CD8-positive, alpha-beta T cell (primary cell): ENCODE measurements at regions of chr11 and their contacts with region 1.

Region 1: DNA sequence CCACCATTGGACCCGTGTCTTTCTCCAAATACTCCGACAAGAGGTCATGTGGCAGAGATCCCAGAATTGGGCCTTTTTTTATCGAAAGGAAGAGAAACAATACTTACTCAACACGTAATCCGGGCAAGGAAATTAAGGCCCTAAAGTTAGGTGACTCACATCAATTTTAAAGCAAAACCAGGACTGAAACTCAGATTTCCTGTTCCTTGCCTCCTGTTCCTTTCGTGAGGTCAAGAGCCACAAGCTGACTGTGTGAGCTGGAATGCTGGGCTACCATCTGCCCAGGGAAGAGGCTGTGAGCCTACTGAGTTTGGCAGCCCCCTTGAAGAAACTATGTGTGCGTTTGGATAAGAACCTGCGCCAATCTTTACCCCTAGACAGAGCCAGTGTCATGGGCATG is 27.1 kb upstream of the MRGPRX2 start:
- DNase-seq: no peak
- ATAC-seq: no peak
- H3K4me3 ChIP-seq: no peak overlapping the region
- H3K4me3 Mint-ChIP-seq: no peak overlapping the region
- H3K27ac ChIP-seq: no peak overlapping the region
- H3K27ac Mint-ChIP-seq: no peak overlapping the region
- H3K4me1 ChIP-seq: no peaks in the 10 kb centered on the region
- H3K4me1 Mint-ChIP-seq: no peaks in the 10 kb centered on the region
- H3K27me3 ChIP-seq: no peaks in the 10 kb centered on the region
- H3K27me3 Mint-ChIP-seq: peaks cover 26% of the 10 kb centered on the region
- CTCF ChIP-seq: no peak

Region 2: DNA sequence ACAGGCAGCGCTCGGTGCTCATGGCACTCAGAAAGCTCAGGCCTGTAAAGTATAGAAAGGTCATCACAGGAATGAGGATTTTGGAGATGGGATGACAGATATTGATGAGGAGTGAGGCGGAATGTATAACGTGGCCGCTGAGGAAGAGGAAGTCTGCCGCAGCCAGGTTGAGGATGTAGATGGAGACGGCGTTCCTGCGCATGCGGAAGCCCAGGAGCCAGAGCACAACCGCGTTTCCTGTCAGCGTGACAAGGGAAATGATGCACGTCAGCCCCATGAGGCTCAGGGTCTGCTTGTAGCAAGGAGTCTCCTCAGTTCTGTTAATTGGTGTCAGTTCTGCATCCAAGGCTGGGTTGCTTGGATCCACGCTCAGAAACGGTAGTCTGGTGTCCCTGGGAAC is 115.3 kb before region 1 on chr11:
- CTCF ChIA-PET with region 1: no interaction called
- POLR2A ChIA-PET with region 1: no interaction called
- intact Hi-C with region 1: no loop called
- DNase-seq: no peak
- ATAC-seq: no peak
- H3K4me3 ChIP-seq: no peak overlapping the region
- H3K4me3 Mint-ChIP-seq: no peak overlapping the region
- H3K27ac ChIP-seq: no peak overlapping the region
- H3K27ac Mint-ChIP-seq: no peak overlapping the region
- H3K4me1 ChIP-seq: no peaks in the 10 kb centered on the region
- H3K4me1 Mint-ChIP-seq: no peaks in the 10 kb centered on the region
- H3K27me3 ChIP-seq: no peaks in the 10 kb centered on the region
- H3K27me3 Mint-ChIP-seq: peaks cover 9% of the 10 kb centered on the region
- CTCF ChIP-seq: no peak

Region 3: DNA sequence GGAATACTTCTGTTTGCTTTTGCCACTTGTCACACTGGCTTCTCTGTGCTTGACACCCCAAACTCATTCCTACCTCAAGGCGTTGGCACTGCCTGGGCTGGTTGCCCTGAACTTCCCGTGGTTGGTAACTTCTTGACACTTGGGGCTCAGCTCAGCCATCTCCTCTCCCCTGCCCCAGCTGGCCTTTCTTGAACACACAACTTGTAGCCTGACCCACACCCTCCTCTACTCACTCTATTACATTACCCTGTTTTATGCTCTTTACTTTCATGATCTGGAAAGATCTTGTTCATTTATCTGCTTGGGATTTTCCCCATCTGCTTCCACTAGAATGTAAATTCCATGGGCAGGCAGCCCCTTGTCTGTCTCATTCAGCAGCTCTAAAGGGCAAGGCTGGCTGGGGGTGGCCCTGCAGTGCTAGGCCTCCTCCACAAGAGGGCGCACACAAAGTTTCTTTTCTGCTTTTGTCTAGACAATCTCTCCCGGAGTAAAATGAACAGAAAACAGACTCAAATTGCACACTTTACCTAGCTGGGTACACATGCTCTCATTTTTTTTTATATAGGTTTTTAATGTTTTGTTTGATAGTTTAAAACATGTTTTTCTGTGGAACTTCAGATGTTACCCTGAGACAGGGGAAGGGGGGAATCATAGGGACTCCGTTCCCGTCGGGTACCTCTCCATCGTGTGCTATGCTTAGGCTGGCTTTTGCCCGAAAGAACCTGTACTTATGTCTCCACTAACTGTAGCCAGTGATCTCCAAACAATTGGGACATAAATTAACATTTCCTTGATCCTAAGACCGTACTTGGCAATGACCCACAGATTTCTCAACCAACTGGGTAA is 10.7 kb before region 1 on chr11:
- CTCF ChIA-PET with region 1: interaction called, 28 read pairs
- POLR2A ChIA-PET with region 1: no interaction called
- intact Hi-C with region 1: no loop called
- DNase-seq: peak; percentile 20 to 68 (median 59)
- ATAC-seq: peak; percentile 61
- H3K4me3 ChIP-seq: no peak overlapping the region
- H3K4me3 Mint-ChIP-seq: no peak overlapping the region
- H3K27ac ChIP-seq: no peak overlapping the region
- H3K27ac Mint-ChIP-seq: no peak overlapping the region
- H3K4me1 ChIP-seq: no peaks in the 10 kb centered on the region
- H3K4me1 Mint-ChIP-seq: peaks cover 3% of the 10 kb centered on the region
- H3K27me3 ChIP-seq: no peaks in the 10 kb centered on the region
- H3K27me3 Mint-ChIP-seq: peaks cover 14% of the 10 kb centered on the region
- CTCF ChIP-seq: peak; percentile 99